Esophagus squamous epithelium (tissue), 5 donors: ENCODE measurements at regions of chr2 and their contacts with region 1.

Region 1: GRCh38 chr2:132547074-132547687 is 122.8 kb downstream of the LYPD1 start:
- DNase-seq: no peak
- H3K4me3 ChIP-seq: no peak overlapping the region
- H3K27ac ChIP-seq: no peak overlapping the region
- H3K4me1 ChIP-seq: no peaks in the 10 kb centered on the region
- H3K27me3 ChIP-seq: no peaks in the 10 kb centered on the region
- CTCF ChIP-seq: peak; percentile 48 to 81 (median 69)
- POLR2A ChIP-seq: no peak

Region 2: DNA sequence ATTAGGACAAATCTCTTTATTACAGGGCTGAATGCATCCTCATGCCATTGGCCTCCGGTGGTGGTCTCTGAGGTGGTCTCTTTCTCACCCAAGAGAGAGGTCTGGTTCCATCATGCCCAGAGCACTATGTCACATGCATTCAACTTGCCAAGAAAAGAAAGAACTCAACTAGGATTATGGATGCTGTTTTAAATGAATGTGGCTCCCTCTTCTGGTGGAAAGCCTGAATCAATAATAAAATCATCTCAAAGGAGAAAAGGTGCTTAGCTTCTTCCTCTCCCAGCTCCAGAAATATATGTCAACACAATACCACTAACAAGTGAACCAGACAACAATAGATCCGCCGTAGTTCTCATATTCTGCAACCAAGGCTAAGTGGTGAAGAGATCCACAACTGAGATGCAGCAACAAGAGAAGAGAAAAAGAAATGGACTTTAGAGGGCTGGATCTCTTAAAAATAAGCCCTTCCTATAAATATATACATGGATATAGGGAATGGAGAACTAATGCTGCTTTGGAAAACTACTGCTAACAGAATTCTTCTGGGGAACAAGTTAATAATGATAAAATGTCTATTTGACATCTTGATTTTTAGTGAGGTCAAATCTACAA is 624.3 kb after region 1 on chr2:
- intact Hi-C with region 1: loop called (anchors 5 kb)
- DNase-seq: no peak
- H3K4me3 ChIP-seq: no peak overlapping the region
- H3K27ac ChIP-seq: no peak overlapping the region
- H3K4me1 ChIP-seq: no peaks in the 10 kb centered on the region
- H3K27me3 ChIP-seq: no peaks in the 10 kb centered on the region
- CTCF ChIP-seq: peak in 5 of 6 experiments; percentile 45 to 76 (median 46)
- POLR2A ChIP-seq: no peak

Region 3: DNA sequence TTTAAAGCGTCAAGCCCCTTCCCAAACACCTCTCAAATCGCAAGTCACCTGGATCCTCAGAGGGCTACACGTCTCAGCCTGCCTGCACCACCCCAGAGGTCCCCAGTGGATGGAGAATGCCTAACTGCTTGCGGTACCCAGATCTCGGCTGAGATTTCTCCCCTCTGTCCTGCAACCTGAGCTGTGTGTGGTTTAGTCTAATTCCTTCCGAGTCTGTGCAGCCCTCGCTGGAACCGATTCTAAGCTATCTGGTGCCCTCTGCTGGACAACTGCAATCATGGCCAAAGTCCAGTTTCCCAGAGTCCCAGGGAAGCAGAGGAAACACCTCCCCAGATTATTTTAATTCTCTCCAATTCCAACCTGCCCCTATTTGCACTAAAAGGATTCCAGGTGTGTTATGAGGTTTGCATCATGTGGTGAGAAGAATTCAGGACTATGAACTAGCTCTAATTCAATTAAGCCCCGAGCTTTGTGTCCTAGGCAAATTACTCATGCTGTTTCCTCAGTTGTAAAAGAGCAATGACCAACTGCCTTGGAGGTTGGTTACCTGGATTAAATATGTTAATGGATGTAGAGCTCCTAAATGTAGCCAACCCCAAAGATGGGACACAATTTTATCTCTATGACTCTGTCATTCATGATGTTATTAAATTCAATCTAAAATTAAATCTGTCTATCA is 1297.2 kb after region 1 on chr2:
- intact Hi-C with region 1: loop called (anchors 10 kb)
- DNase-seq: no peak
- H3K4me3 ChIP-seq: no peak overlapping the region
- H3K27ac ChIP-seq: no peak overlapping the region
- H3K4me1 ChIP-seq: peaks cover 0 to 4% (median 0%) of the 10 kb centered on the region in 3 donors
- H3K27me3 ChIP-seq: peaks cover 0 to 13% (median 0%) of the 10 kb centered on the region in 4 donors
- CTCF ChIP-seq: peak; percentile 74 to 83 (median 79)
- POLR2A ChIP-seq: no peak